A673 (cell line): ENCODE measurements at regions of chr7 and their contacts with region 1.

Region 1: GRCh38 chr7:99499721-99500636 is at the start of gene ZNF394:
- DNase-seq: peak; percentile 97
- H3K4me3 ChIP-seq: peak within 1 kb of the TSS; percentile 98
- H3K27ac ChIP-seq: peak within 1 kb of the TSS; percentile 91
- H3K4me1 ChIP-seq: peaks cover 5% of the 10 kb centered on the region
- H3K27me3 ChIP-seq: no peaks in the 10 kb centered on the region
- CTCF ChIP-seq: no peak
- total RNA-seq, gene ZNF394: 19.3 and 20.2 TPM in 2 replicates

Region 2: GRCh38 chr7:99551767-99552463 is 51.9 kb after region 1 on chr7 and contains the start of gene FAM200A:
- CTCF ChIA-PET with region 1: no interaction called
- POLR2A ChIA-PET with region 1: interaction called, 7 read pairs
- intact Hi-C with region 1: loop called (anchors 1 kb)
- DNase-seq: peak; percentile 97
- H3K4me3 ChIP-seq: peak within 1 kb of the TSS; percentile 76
- H3K27ac ChIP-seq: peak within 1 kb of the TSS; percentile 87
- H3K4me1 ChIP-seq: peaks cover under 1% of the 10 kb centered on the region
- H3K27me3 ChIP-seq: no peaks in the 10 kb centered on the region
- CTCF ChIP-seq: no peak
- total RNA-seq, gene FAM200A: 6.1 and 8.4 TPM in 2 replicates

Region 3: DNA sequence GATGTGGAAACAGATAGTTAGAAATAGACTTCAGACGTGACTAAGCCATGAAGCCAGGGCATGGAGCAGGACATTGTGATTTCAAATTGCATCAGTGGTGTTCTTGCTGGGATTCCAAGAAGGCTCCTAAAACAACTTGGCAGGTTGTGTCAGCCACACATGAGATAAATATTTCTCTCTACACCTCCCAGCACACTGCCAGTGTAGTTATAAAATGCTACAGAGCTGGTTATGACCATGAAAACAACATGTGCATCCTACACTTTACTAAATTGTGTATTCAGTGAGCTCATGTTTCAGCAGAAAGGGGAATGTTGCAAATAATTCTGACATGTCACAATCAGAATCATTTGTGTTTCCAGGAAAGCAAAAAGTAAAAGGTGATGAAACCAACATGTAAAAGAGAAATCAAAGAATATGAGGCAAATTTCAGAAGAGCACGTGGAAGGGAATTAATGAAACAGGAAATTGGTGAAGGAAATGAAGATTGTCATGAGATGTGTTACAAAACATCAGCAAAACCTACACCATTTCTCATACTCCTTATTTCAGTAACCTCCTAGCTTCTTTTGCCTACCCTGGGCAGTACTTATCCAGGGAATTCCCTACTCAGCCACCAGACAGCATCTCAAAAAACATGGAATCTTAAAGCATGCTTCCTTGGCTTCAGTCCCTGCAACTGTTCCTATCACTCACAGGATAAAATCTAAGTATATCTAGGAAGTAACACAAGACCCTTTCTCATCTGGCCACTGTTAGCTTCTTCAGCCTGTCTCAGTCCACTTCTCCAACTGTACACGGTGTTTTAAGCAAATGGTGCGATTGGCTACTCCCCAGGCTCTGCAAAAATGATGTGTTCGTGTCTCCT is 240.8 kb after region 1 on chr7:
- CTCF ChIA-PET with region 1: no interaction called
- POLR2A ChIA-PET with region 1: no interaction called
- intact Hi-C with region 1: no loop called
- DNase-seq: no peak
- H3K4me3 ChIP-seq: no peak overlapping the region
- H3K27ac ChIP-seq: no peak overlapping the region
- H3K4me1 ChIP-seq: peaks cover 17% of the 10 kb centered on the region
- H3K27me3 ChIP-seq: no peaks in the 10 kb centered on the region
- CTCF ChIP-seq: no peak

Region 4: DNA sequence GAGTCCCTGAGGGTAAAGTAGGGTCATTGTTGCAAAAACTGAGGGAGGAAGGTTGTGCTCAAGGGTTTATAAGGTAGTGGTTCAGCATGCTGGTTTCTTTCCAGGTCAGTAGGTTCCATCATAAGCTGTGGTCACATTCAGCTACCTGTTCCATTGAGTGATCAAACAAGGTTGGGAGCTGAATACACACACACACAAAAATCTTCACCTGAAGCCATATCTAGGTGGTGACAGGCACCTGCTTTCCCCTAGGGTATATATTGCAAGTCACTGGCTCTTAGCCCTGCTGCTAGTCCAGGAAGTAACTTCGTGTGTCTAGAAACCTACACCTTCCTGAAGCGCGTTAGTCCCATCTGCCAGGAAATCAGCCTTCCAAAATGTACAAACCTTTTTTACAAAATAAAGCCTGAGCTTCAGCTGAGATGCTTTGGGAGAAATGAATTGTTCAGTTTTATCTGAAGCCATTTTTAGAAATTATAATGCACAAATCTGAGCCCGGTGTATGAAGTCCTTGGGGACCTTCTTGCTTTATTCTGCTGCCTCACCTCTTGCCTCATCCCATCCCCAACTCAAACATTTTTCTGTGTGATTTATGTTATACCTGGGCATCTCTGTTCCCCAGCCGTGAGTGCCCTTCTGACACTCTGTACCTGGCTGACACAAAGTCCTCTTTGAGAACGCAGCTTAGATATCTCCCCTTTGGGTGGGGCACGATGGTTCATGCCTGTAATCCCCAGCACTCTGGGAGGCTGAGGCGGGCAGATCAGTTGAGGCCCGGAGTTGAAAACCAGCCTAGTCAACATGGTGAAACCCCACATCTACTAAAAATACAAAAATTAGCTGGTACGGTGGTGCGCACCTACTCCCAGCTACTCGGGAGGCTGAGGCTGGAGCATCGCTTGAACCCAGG is 638.1 kb after region 1 on chr7:
- CTCF ChIA-PET with region 1: no interaction called
- POLR2A ChIA-PET with region 1: no interaction called
- intact Hi-C with region 1: no loop called
- DNase-seq: no peak
- H3K4me3 ChIP-seq: no peak overlapping the region
- H3K27ac ChIP-seq: no peak overlapping the region
- H3K4me1 ChIP-seq: no peaks in the 10 kb centered on the region
- H3K27me3 ChIP-seq: no peaks in the 10 kb centered on the region
- CTCF ChIP-seq: no peak